ENCODE measurements at regions of chr19 and their contacts with region 1.

Region 1: GRCh38 chr19:4744451-4745174 is 21.0 kb upstream of the DPP9 start:
- DNase-seq: no peak
- ATAC-seq: peak; percentile 58

Region 2: GRCh38 chr19:4654437-4655361 is 89.9 kb before region 1 on chr19:
- intact Hi-C with region 1: no loop called
- DNase-seq: no peak
- ATAC-seq: peak; percentile 13

Region 3: GRCh38 chr19:4781801-4782200 is 37.2 kb after region 1 on chr19:
- intact Hi-C with region 1: loop called (anchors 5 to 10 kb)
- DNase-seq: no peak
- ATAC-seq: no peak